Naive thymus-derived CD4-positive, alpha-beta T cell (primary cell): ENCODE measurements at regions of chr14 and their contacts with region 1.

Region 1: DNA sequence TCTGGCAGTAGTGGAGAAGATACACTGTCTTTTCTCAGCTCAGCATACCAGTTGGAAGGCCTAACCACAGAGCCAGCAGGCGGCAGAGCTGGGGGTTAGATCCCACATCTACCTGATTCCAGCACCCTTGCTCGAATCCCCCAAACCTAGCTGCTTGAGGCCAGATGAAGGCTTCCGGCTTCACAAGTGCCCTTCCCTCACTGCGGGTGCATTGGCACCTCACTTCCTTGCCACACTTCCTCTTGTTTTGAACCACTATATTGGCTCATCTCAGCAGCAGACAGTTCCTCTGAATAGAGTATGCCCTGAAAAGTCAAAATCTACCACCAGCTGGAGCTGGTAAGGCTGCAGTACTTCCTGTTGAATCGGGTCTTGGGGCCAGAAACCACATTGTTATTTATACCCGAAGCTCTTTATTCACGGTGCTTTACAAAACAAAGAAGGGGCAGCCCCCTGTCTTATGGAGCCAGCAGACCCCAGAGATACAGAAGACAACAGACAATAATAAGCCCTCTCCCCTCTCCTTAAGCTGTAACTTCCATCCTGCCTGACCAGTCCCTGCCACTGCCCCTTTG is 233.7 kb downstream of the EFCAB11 start:
- DNase-seq: peak; percentile 43 to 91 (median 88)
- ATAC-seq: peak; percentile 96
- H3K4me3 ChIP-seq: peak overlapping the region; percentile 43
- H3K4me3 Mint-ChIP-seq: peak overlapping the region; percentile 65 to 81 (median 73)
- H3K27ac ChIP-seq: peak overlapping the region; percentile 70
- H3K27ac Mint-ChIP-seq: peak overlapping the region; percentile 94 to 99 (median 98)
- H3K4me1 ChIP-seq: peaks cover 76 to 78% of the 10 kb centered on the region in 2 donors
- H3K4me1 Mint-ChIP-seq: peaks cover 68 to 99% (median 92%) of the 10 kb centered on the region in 7 donors
- H3K27me3 ChIP-seq: no peaks in the 10 kb centered on the region
- H3K27me3 Mint-ChIP-seq: no peaks in the 10 kb centered on the region

Region 2: DNA sequence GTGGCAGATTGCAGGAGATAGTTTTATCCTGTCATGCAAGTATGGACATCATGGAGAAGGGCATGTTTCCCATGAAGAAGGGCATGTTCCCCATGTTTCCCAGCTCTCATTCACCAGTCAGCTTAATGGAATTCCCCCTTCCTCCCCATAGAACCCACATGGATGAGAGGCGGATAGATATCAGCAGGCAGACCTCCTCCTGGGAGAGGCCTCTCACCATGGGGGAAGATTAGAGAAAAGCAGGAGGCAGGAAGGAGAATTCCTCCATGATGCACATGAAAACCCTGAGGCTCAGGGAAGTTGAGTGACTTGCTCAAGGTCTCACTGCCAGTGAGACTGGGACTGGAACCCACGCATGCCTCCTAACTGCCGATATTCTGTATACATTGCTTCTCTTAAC is 210.9 kb before region 1 on chr14:
- CTCF ChIA-PET with region 1: no interaction called
- POLR2A ChIA-PET with region 1: no interaction called
- intact Hi-C with region 1: loop called (anchors 1 kb)
- DNase-seq: no peak
- ATAC-seq: no peak
- H3K4me3 ChIP-seq: no peak overlapping the region
- H3K4me3 Mint-ChIP-seq: peak overlapping the region; percentile 75 to 89 (median 84)
- H3K27ac ChIP-seq: peak overlapping the region; percentile 52
- H3K27ac Mint-ChIP-seq: peak overlapping the region; percentile 90 to 96 (median 94)
- H3K4me1 ChIP-seq: peaks cover 18 to 25% of the 10 kb centered on the region in 2 donors
- H3K4me1 Mint-ChIP-seq: peaks cover 46 to 79% (median 65%) of the 10 kb centered on the region in 7 donors
- H3K27me3 ChIP-seq: no peaks in the 10 kb centered on the region
- H3K27me3 Mint-ChIP-seq: no peaks in the 10 kb centered on the region

Region 3: DNA sequence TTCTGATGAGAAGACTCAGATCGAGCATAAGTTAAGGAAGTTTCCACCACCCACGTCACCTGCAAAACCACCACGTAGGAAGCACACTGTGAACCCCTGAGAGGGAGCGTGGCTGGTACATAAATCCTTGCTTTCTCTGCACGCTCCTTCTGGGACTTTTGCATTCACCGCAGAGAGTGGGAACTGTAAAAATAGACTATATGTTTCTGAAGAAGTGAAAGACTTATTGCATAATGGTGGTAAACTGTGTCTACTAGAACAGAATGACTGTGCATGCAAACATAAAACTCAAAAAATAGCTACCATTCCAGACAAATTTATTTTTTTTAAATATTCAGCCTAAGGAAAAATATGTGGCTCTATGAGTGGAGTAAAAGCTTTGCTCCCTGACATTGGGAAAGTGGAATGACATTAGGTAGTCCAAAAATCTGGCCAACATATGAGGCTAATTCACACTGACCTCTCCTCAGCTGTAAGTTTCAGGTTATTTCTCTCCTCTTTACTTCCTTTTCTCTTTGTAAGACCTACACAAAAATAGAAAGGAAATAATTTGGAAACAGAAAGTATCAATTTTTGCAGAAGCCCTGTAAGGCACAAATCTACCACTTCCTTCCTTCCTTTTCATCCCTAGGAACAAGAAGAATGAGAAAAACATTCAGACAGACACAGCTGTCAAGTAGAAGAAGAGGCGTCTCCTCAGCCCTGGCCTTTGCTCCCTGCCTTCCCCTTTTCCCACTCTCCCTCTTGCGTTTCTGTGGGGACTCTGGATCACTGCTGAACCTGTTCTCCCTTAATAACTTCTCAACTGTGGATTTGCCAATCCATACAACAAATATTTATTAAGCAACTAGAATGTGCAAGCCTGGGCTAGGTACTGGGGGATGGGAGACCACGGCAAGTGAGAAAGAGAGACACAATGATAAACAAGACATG is 39.5 kb before region 1 on chr14:
- CTCF ChIA-PET with region 1: interaction called, 4 read pairs
- POLR2A ChIA-PET with region 1: interaction called, 3 read pairs
- intact Hi-C with region 1: loop called (anchors 1 to 2 kb)
- DNase-seq: peak in 8 of 9 donors; percentile 35 to 66 (median 55)
- ATAC-seq: peak; percentile 70
- H3K4me3 ChIP-seq: peak overlapping the region; percentile 53
- H3K4me3 Mint-ChIP-seq: peak overlapping the region; percentile 77 to 92 (median 82)
- H3K27ac ChIP-seq: peak overlapping the region; percentile 54
- H3K27ac Mint-ChIP-seq: peak overlapping the region; percentile 92 to 98 (median 95)
- H3K4me1 ChIP-seq: peaks cover 25 to 42% of the 10 kb centered on the region in 2 donors
- H3K4me1 Mint-ChIP-seq: peaks cover 25 to 64% (median 55%) of the 10 kb centered on the region in 7 donors
- H3K27me3 ChIP-seq: no peaks in the 10 kb centered on the region
- H3K27me3 Mint-ChIP-seq: no peaks in the 10 kb centered on the region

Region 4: GRCh38 chr14:89750281-89750755 is 29.5 kb after region 1 on chr14:
- CTCF ChIA-PET with region 1: no interaction called
- POLR2A ChIA-PET with region 1: interaction called, 7 read pairs
- intact Hi-C with region 1: loop called in 1 of 2 experiments (anchors 2 kb)
- DNase-seq: no peak
- ATAC-seq: no peak
- H3K4me3 ChIP-seq: no peak overlapping the region
- H3K4me3 Mint-ChIP-seq: peak overlapping the region in 2 of 10 donors; percentile 25 to 31
- H3K27ac ChIP-seq: no peak overlapping the region
- H3K27ac Mint-ChIP-seq: no peak overlapping the region
- H3K4me1 ChIP-seq: peaks cover 10% of the 10 kb centered on the region in 2 donors
- H3K4me1 Mint-ChIP-seq: peaks cover 14 to 43% (median 26%) of the 10 kb centered on the region in 7 donors
- H3K27me3 ChIP-seq: no peaks in the 10 kb centered on the region
- H3K27me3 Mint-ChIP-seq: no peaks in the 10 kb centered on the region

Region 5: GRCh38 chr14:91249841-91250616 is 1529.2 kb after region 1 on chr14:
- CTCF ChIA-PET with region 1: no interaction called
- POLR2A ChIA-PET with region 1: no interaction called
- intact Hi-C with region 1: loop called in 1 of 2 experiments (anchors 5 kb)
- DNase-seq: peak in 4 of 9 donors; percentile 20 to 52 (median 40)
- ATAC-seq: peak; percentile 8
- H3K4me3 ChIP-seq: peak overlapping the region; percentile 36
- H3K4me3 Mint-ChIP-seq: peak overlapping the region; percentile 27 to 84 (median 57)
- H3K27ac ChIP-seq: peak overlapping the region; percentile 55
- H3K27ac Mint-ChIP-seq: peak overlapping the region; percentile 53 to 98 (median 91)
- H3K4me1 ChIP-seq: peaks cover 63 to 81% of the 10 kb centered on the region in 2 donors
- H3K4me1 Mint-ChIP-seq: peaks cover 54 to 87% (median 80%) of the 10 kb centered on the region in 7 donors
- H3K27me3 ChIP-seq: no peaks in the 10 kb centered on the region
- H3K27me3 Mint-ChIP-seq: no peaks in the 10 kb centered on the region